MCF 10A (cell line): ENCODE measurements at regions of chr4 and their contacts with region 1.

Region 1: GRCh38 chr4:84258905-84259830 is 239.9 kb downstream of the NKX6-1 start:
- DNase-seq: peak; percentile 53
- H3K4me3 Mint-ChIP-seq: no peak overlapping the region
- H3K27ac Mint-ChIP-seq: no peak overlapping the region
- H3K4me1 Mint-ChIP-seq: peaks cover 5% of the 10 kb centered on the region
- H3K27me3 Mint-ChIP-seq: peaks cover 80% of the 10 kb centered on the region
- CTCF ChIP-seq: peak; percentile 69

Region 2: DNA sequence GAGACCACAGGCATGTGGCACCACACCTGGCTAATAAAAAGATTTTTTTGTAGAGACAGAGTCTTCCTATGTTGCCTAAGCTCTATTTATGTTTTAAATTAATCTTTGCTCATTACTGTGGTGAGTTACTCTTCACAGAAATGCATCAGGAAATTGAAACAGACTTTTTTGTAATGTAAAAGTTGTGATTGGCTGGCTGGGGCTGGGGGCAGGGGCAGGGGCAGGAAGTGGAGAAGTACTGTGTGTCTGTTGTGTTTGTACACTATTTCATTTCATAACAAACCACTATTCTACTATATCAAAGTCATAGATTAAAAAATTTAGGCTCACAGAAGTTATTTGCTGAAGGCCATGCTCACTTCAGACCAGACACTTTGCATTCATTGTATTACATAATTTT is 755.2 kb before region 1 on chr4:
- CTCF ChIA-PET with region 1: no interaction called
- POLR2A ChIA-PET with region 1: no interaction called
- intact Hi-C with region 1: loop called (anchors 5 kb)
- DNase-seq: no peak
- H3K4me3 Mint-ChIP-seq: no peak overlapping the region
- H3K27ac Mint-ChIP-seq: no peak overlapping the region
- H3K4me1 Mint-ChIP-seq: no peaks in the 10 kb centered on the region
- H3K27me3 Mint-ChIP-seq: no peaks in the 10 kb centered on the region
- CTCF ChIP-seq: no peak

Region 3: DNA sequence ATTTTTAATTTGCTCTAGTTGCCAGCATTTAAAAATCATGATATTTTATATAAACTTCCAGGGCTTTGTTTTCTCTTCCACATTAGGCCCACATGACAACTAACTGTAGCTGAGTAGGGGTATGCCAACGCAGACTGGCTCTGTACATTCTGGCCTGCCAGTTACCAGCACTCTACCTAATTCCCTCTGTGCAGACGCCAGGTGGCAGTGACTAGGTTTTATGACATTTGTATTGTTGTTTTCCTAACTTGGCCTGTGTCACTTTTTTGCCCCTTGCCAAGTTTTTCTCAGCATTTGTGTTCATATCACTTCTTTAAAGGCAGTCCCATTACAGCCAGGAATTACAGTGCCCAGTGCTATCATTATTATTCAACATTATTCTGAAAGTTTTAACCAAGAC is 107.6 kb before region 1 on chr4:
- CTCF ChIA-PET with region 1: interaction called, 5 read pairs
- POLR2A ChIA-PET with region 1: no interaction called
- intact Hi-C with region 1: loop called (anchors 5 kb)
- DNase-seq: peak; percentile 26
- H3K4me3 Mint-ChIP-seq: no peak overlapping the region
- H3K27ac Mint-ChIP-seq: no peak overlapping the region
- H3K4me1 Mint-ChIP-seq: no peaks in the 10 kb centered on the region
- H3K27me3 Mint-ChIP-seq: peaks cover 37% of the 10 kb centered on the region
- CTCF ChIP-seq: no peak